ENCODE measurements at regions of chr9 and their contacts with region 1.

Region 1: DNA sequence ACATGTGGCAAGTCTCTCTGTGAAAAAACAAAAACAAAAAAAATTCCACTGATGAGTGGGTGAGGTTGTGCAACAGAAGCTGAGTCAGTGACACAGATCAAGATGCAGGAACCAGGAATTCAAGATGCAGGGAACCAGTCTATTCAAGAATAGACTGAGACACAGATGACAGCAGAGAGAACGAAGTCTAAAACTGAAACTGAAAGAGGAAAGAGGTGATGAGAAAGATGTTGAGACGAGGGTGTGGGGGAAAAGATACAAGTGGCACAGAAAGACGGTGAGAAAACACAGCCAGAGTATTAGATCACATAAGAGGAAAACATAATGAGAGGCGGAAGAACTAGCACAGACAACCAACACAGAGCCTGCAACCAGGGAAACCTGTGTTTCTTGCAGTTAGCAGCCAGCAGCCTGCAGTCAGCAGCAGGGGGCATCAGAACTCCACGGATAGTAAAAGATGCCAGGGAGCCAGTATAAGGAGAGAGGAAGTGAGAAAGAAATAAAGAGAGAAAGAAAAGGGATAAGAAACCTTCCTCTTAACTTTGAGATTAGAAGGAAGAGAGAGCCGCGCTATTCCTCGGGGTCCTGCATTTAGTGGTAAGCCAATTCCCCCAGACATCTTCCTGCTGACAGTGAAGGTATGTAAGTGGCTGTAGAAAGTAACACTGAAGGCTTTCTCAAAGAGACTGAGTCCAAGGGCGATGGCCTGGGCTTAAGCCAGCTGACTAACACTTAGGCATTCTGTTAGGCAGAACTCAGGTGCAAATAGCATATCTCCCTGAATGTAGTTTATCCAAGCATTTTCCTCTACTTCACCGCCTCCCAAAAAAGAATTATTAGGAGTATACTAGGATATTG is 79.0 kb downstream of the TLR4 start:
- DNase-seq: peak; percentile 32
- ATAC-seq: peak; percentile 85
- H3K4me3 ChIP-seq: peak overlapping the region; percentile 21 to 48
- H3K27ac ChIP-seq: no peak overlapping the region
- H3K4me1 ChIP-seq: no peaks in the 10 kb centered on the region
- H3K27me3 ChIP-seq: no peaks in the 10 kb centered on the region
- CTCF ChIP-seq: peak; percentile 69

Region 2: DNA sequence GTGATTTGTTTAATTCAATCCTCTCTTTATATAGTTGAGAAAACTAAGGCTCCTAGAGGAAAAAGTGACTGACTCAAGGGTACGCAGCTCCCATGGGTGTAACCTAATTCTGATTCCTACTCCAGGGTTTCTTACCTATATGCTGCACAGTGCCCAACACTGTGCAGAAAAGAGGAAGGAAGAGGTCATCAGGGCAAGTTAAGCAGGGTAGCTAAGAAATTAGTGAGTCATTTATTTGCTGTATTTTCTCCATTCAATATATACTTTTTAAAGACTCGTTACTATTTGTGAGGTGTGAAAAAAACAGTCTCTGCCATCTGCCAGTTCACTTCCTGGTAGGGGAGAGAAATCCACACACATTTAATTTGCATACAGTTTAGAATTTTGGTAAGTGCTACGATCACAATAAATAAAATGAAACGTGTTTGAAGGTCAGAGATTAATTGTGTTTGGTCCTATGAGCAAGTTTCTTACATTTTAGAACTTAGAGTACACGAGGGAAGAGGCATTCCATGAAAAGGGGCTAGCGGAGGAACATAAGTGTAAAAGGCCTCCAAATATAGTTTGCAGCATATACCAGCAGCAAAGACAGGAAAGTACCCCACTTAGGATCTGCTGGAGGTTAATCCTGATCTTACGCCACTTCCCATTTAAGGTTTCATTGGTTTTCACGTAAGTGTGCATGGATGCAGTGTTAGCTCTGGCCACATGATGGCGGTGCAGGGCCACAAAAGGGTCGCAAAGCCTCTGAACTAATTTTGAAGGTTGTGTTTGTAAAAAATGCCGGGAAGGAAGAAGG is 138.8 kb before region 1 on chr9:
- CTCF ChIA-PET with region 1: no interaction called
- POLR2A ChIA-PET with region 1: no interaction called
- in situ Hi-C with region 1: no loop called
- intact Hi-C with region 1: loop called (anchors 10 kb)
- DNase-seq: peak; percentile 57
- ATAC-seq: peak; percentile 65; the same call in 1 of the 2 replicates
- H3K4me3 ChIP-seq: no peak overlapping the region
- H3K27ac ChIP-seq: no peak overlapping the region
- H3K4me1 ChIP-seq: no peaks in the 10 kb centered on the region; the same call in 1 of the 2 replicates
- H3K27me3 ChIP-seq: peaks cover 5% of the 10 kb centered on the region; the same call in 1 of the 2 replicates
- CTCF ChIP-seq: peak; percentile 82

Region 3: GRCh38 chr9:119365291-119366027 is 1582.3 kb after region 1 on chr9:
- CTCF ChIA-PET with region 1: no interaction called
- POLR2A ChIA-PET with region 1: no interaction called
- in situ Hi-C with region 1: no loop called
- intact Hi-C with region 1: loop called (anchors 5 kb)
- DNase-seq: no peak
- ATAC-seq: no peak
- H3K4me3 ChIP-seq: no peak overlapping the region
- H3K27ac ChIP-seq: no peak overlapping the region
- H3K4me1 ChIP-seq: no peaks in the 10 kb centered on the region
- H3K27me3 ChIP-seq: no peaks in the 10 kb centered on the region
- CTCF ChIP-seq: peak; percentile 54

Measured in Panc1 (cell line).